Naive thymus-derived CD4-positive, alpha-beta T cell (primary cell): ENCODE measurements at regions of chr5 and their contacts with region 1.

Region 1: DNA sequence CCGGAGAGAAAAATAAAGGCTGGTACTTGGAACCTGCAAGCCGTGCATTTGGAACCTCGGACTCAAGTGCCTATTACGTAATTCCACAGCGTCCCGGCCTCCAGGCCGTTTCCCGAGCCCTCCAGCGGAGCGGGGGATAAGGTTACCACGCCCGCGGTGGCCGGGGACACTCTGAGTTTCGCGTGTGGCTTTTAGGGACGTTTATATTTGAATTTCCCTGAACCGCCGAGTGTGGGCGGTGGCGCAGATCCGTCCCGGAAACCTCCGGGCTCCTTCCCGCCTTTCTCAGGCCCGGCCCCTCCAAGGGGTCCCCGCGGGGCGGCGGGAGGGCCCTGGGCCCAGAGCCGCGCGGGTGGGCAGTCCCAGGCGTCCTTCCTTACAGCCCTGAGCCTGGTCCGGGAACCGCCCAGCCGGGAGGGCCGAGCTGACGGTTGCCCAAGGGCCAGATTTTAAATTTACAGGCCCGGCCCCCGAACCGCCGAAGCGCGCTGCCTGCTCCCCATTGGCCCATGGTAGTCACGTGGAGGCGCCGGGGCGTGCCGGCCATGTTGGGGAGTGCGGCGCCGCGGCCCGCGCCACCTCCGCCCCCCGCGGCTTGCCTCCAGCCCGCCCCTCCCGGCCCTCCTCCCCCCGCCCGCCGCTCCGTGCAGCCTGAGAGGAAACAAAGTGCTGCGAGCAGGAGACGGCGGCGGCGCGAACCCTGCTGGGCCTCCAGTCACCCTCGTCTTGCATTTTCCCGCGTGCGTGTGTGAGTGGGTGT is at the start of gene LMNB1:
- DNase-seq: peak; percentile 90 to 98 (median 94)
- ATAC-seq: peak; percentile 86
- H3K4me3 ChIP-seq: peak within 1 kb of the TSS; percentile 93
- H3K4me3 Mint-ChIP-seq: peak within 1 kb of the TSS; percentile 89 to 97 (median 96)
- H3K27ac ChIP-seq: peak within 1 kb of the TSS; percentile 97
- H3K27ac Mint-ChIP-seq: peak within 1 kb of the TSS; percentile 91 to 99 (median 95)
- H3K4me1 ChIP-seq: peaks cover 18 to 22% of the 10 kb centered on the region in 2 donors
- H3K4me1 Mint-ChIP-seq: peaks cover 6 to 31% (median 25%) of the 10 kb centered on the region in 7 donors
- H3K27me3 ChIP-seq: no peaks in the 10 kb centered on the region
- H3K27me3 Mint-ChIP-seq: no peaks in the 10 kb centered on the region
- total RNA-seq, gene LMNB1: 20.8 to 218 (median 32.6) TPM

Region 2: GRCh38 chr5:126449751-126450271 is 326.9 kb before region 1 on chr5:
- CTCF ChIA-PET with region 1: no interaction called
- POLR2A ChIA-PET with region 1: interaction called, 7 read pairs
- intact Hi-C with region 1: loop called in 1 of 2 experiments (anchors 5 kb)
- DNase-seq: peak in 8 of 9 donors; percentile 48 to 75 (median 64)
- ATAC-seq: peak; percentile 87
- H3K4me3 ChIP-seq: peak overlapping the region; percentile 47
- H3K4me3 Mint-ChIP-seq: peak overlapping the region; percentile 75 to 94 (median 88)
- H3K27ac ChIP-seq: peak overlapping the region; percentile 77
- H3K27ac Mint-ChIP-seq: peak overlapping the region; percentile 96 to 100 (median 99)
- H3K4me1 ChIP-seq: peaks cover 11 to 57% of the 10 kb centered on the region in 2 donors
- H3K4me1 Mint-ChIP-seq: peaks cover 32 to 90% (median 75%) of the 10 kb centered on the region in 7 donors
- H3K27me3 ChIP-seq: no peaks in the 10 kb centered on the region
- H3K27me3 Mint-ChIP-seq: no peaks in the 10 kb centered on the region

Region 3: GRCh38 chr5:126656396-126657007 is 120.2 kb before region 1 on chr5:
- CTCF ChIA-PET with region 1: interaction called, 16 read pairs
- POLR2A ChIA-PET with region 1: no interaction called
- intact Hi-C with region 1: loop called (anchors 1 kb)
- DNase-seq: peak in 5 of 9 donors; percentile 13 to 27 (median 24)
- ATAC-seq: no peak
- H3K4me3 ChIP-seq: no peak overlapping the region
- H3K4me3 Mint-ChIP-seq: no peak overlapping the region
- H3K27ac ChIP-seq: no peak overlapping the region
- H3K27ac Mint-ChIP-seq: no peak overlapping the region
- H3K4me1 ChIP-seq: no peaks in the 10 kb centered on the region
- H3K4me1 Mint-ChIP-seq: peaks cover 0 to 8% (median 0%) of the 10 kb centered on the region in 7 donors
- H3K27me3 ChIP-seq: no peaks in the 10 kb centered on the region
- H3K27me3 Mint-ChIP-seq: peaks cover 0 to 9% (median 0%) of the 10 kb centered on the region in 5 donors

Region 4: GRCh38 chr5:126757713-126758357 is 18.8 kb before region 1 on chr5:
- CTCF ChIA-PET with region 1: interaction called, 8 read pairs
- POLR2A ChIA-PET with region 1: interaction called, 4 read pairs
- intact Hi-C with region 1: loop called in 1 of 2 experiments (anchors 1 kb)
- DNase-seq: no peak
- ATAC-seq: no peak
- H3K4me3 ChIP-seq: no peak overlapping the region
- H3K4me3 Mint-ChIP-seq: peak overlapping the region in 6 of 10 donors; percentile 6 to 72 (median 44)
- H3K27ac ChIP-seq: no peak overlapping the region
- H3K27ac Mint-ChIP-seq: peak overlapping the region in 6 of 9 donors; percentile 2 to 88 (median 32)
- H3K4me1 ChIP-seq: peaks cover 0 to 6% of the 10 kb centered on the region in 2 donors
- H3K4me1 Mint-ChIP-seq: peaks cover 7 to 51% (median 12%) of the 10 kb centered on the region in 7 donors
- H3K27me3 ChIP-seq: no peaks in the 10 kb centered on the region
- H3K27me3 Mint-ChIP-seq: no peaks in the 10 kb centered on the region

Region 5: GRCh38 chr5:126852091-126852571 is 75.5 kb after region 1 on chr5:
- CTCF ChIA-PET with region 1: interaction called, 4 read pairs
- POLR2A ChIA-PET with region 1: interaction called, 31 read pairs
- intact Hi-C with region 1: loop called (anchors 1 to 2 kb)
- DNase-seq: peak in 7 of 9 donors; percentile 38 to 72 (median 63)
- ATAC-seq: peak; percentile 81
- H3K4me3 ChIP-seq: peak overlapping the region; percentile 13
- H3K4me3 Mint-ChIP-seq: peak overlapping the region; percentile 71 to 91 (median 84)
- H3K27ac ChIP-seq: peak overlapping the region; percentile 67
- H3K27ac Mint-ChIP-seq: peak overlapping the region; percentile 95 to 99 (median 99)
- H3K4me1 ChIP-seq: peaks cover 12 to 33% of the 10 kb centered on the region in 2 donors
- H3K4me1 Mint-ChIP-seq: peaks cover 23 to 76% (median 67%) of the 10 kb centered on the region in 7 donors
- H3K27me3 ChIP-seq: no peaks in the 10 kb centered on the region
- H3K27me3 Mint-ChIP-seq: no peaks in the 10 kb centered on the region

Region 6: GRCh38 chr5:127229185-127229889 is 452.7 kb after region 1 on chr5:
- CTCF ChIA-PET with region 1: no interaction called
- POLR2A ChIA-PET with region 1: interaction called, 22 read pairs
- intact Hi-C with region 1: no loop called
- DNase-seq: peak; percentile 28 to 68 (median 64)
- ATAC-seq: peak; percentile 83
- H3K4me3 ChIP-seq: peak overlapping the region; percentile 66
- H3K4me3 Mint-ChIP-seq: peak overlapping the region; percentile 73 to 88 (median 80)
- H3K27ac ChIP-seq: peak overlapping the region; percentile 62
- H3K27ac Mint-ChIP-seq: peak overlapping the region; percentile 36 to 88 (median 84)
- H3K4me1 ChIP-seq: peaks cover 0 to 15% of the 10 kb centered on the region in 2 donors
- H3K4me1 Mint-ChIP-seq: peaks cover 7 to 28% (median 18%) of the 10 kb centered on the region in 7 donors
- H3K27me3 ChIP-seq: no peaks in the 10 kb centered on the region
- H3K27me3 Mint-ChIP-seq: peaks cover 0 to 5% (median 0%) of the 10 kb centered on the region in 5 donors

Region 7: GRCh38 chr5:128053291-128053954 is 1276.7 kb after region 1 on chr5:
- CTCF ChIA-PET with region 1: no interaction called
- POLR2A ChIA-PET with region 1: no interaction called
- intact Hi-C with region 1: no loop called
- DNase-seq: no peak
- ATAC-seq: no peak
- H3K4me3 ChIP-seq: no peak overlapping the region
- H3K4me3 Mint-ChIP-seq: no peak overlapping the region
- H3K27ac ChIP-seq: no peak overlapping the region
- H3K27ac Mint-ChIP-seq: no peak overlapping the region
- H3K4me1 ChIP-seq: no peaks in the 10 kb centered on the region
- H3K4me1 Mint-ChIP-seq: peaks cover 0 to 15% (median 12%) of the 10 kb centered on the region in 7 donors
- H3K27me3 ChIP-seq: no peaks in the 10 kb centered on the region
- H3K27me3 Mint-ChIP-seq: no peaks in the 10 kb centered on the region

Region 8: DNA sequence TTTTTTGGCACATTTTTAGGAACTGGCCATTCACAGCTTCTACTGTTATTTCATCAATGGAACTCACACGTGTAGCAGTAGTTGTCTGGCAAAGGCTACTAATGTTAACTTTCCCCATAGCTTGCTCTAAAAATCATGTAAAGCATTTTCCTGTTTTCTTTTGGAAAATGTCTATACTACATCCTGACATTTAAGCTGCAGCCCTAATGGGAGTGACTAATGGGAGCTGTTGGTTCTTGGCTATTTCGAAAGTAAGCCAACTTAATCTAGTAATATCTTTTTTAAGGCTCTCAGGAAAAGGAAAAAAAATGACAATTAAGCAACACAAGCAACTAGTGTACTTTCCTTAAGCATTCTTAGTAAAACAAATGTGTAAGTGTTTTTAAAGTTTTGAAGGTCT is 1476.1 kb after region 1 on chr5:
- CTCF ChIA-PET with region 1: no interaction called
- POLR2A ChIA-PET with region 1: no interaction called
- intact Hi-C with region 1: no loop called
- DNase-seq: no peak
- ATAC-seq: no peak
- H3K4me3 ChIP-seq: no peak overlapping the region
- H3K4me3 Mint-ChIP-seq: no peak overlapping the region
- H3K27ac ChIP-seq: no peak overlapping the region
- H3K27ac Mint-ChIP-seq: no peak overlapping the region
- H3K4me1 ChIP-seq: no peaks in the 10 kb centered on the region
- H3K4me1 Mint-ChIP-seq: no peaks in the 10 kb centered on the region
- H3K27me3 ChIP-seq: peaks cover 0 to 4% of the 10 kb centered on the region in 2 donors
- H3K27me3 Mint-ChIP-seq: peaks cover 0 to 31% (median 3%) of the 10 kb centered on the region in 5 donors